Naive thymus-derived CD8-positive, alpha-beta T cell (primary cell): ENCODE measurements at regions of chr11 and their contacts with region 1.

Region 1: DNA sequence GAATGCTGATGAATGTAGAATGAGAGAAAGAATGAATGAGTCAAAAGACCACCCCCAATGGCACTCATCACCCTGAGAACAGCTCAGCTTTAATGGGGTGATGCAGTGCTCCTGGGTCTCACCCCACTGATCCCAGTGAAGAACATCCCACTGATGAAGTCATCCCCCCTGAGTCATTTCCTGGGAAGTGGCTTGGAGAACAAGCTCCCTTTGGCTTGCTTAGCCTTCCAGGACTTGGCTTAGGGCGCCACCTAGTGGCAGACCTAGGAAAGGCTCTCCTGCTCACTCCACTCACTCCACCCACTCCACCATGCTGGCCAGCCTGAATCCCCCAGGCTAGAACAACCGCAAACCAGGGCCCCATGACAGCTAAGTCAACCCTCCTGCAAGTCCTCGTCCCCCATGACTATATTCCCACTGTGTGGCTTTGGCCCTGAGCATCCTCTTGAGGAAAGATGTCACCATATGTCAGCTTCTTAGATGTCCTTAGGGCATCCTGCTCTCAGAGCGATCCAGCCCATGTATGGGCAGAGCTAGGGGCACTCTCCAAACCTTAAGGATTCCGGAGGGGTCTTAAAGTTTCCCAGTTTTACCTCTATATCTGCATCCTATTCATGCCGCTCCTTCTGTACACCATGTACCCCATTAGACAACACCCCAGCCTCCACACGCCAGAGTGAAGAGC is 17.8 kb upstream of the TMPRSS13 start:
- DNase-seq: peak; percentile 60 to 87 (median 78)
- ATAC-seq: no peak
- H3K4me3 Mint-ChIP-seq: peak overlapping the region in 9 of 10 donors; percentile 26 to 82 (median 44)
- H3K27ac Mint-ChIP-seq: peak overlapping the region; percentile 9 to 89 (median 69)
- H3K4me1 Mint-ChIP-seq: peaks cover 34 to 74% (median 67%) of the 10 kb centered on the region in 4 donors
- H3K27me3 Mint-ChIP-seq: peaks cover 0 to 2% (median 0%) of the 10 kb centered on the region in 5 donors

Region 2: GRCh38 chr11:117817368-117818040 is 129.5 kb before region 1 on chr11:
- POLR2A ChIA-PET with region 1: interaction called, 54 read pairs
- DNase-seq: peak; percentile 66 to 88 (median 79)
- ATAC-seq: peak in 1 of 2 donors; percentile 16
- H3K4me3 Mint-ChIP-seq: peak overlapping the region in 9 of 10 donors; percentile 48 to 79 (median 64)
- H3K27ac Mint-ChIP-seq: peak overlapping the region; percentile 71 to 94 (median 86)
- H3K4me1 Mint-ChIP-seq: peaks cover 28 to 62% (median 52%) of the 10 kb centered on the region in 4 donors
- H3K27me3 Mint-ChIP-seq: no peaks in the 10 kb centered on the region

Region 3: GRCh38 chr11:117959438-117960149 is 12.6 kb after region 1 on chr11:
- POLR2A ChIA-PET with region 1: interaction called, 17 read pairs
- DNase-seq: no peak
- ATAC-seq: no peak
- H3K4me3 Mint-ChIP-seq: peak overlapping the region in 2 of 10 donors; percentile 28 to 31
- H3K27ac Mint-ChIP-seq: peak overlapping the region in 5 of 10 donors; percentile 4 to 50 (median 27)
- H3K4me1 Mint-ChIP-seq: peaks cover 21 to 64% (median 55%) of the 10 kb centered on the region in 4 donors
- H3K27me3 Mint-ChIP-seq: no peaks in the 10 kb centered on the region

Region 4: GRCh38 chr11:117985953-117986887 is 39.2 kb after region 1 on chr11 and contains the start of gene IL10RA:
- POLR2A ChIA-PET with region 1: interaction called, 309 read pairs
- DNase-seq: peak; percentile 69 to 84 (median 80)
- ATAC-seq: peak; percentile 78 to 79
- H3K4me3 Mint-ChIP-seq: peak within 1 kb of the TSS; percentile 88 to 98 (median 93)
- H3K27ac Mint-ChIP-seq: peak within 1 kb of the TSS; percentile 89 to 99 (median 94)
- H3K4me1 Mint-ChIP-seq: peaks cover 41 to 86% (median 71%) of the 10 kb centered on the region in 4 donors
- H3K27me3 Mint-ChIP-seq: no peaks in the 10 kb centered on the region
- polyA plus RNA-seq, gene IL10RA: 99.2 to 185 (median 147) TPM

Region 5: GRCh38 chr11:118010738-118011461 is 63.9 kb after region 1 on chr11:
- POLR2A ChIA-PET with region 1: interaction called, 309 read pairs
- DNase-seq: peak in 1 of 10 donors; percentile 54
- ATAC-seq: peak; percentile 15 to 16
- H3K4me3 Mint-ChIP-seq: peak overlapping the region in 5 of 10 donors; percentile 28 to 66 (median 47)
- H3K27ac Mint-ChIP-seq: peak overlapping the region in 9 of 10 donors; percentile 60 to 100 (median 94)
- H3K4me1 Mint-ChIP-seq: peaks cover 68 to 100% (median 99%) of the 10 kb centered on the region in 4 donors
- H3K27me3 Mint-ChIP-seq: no peaks in the 10 kb centered on the region

Region 6: DNA sequence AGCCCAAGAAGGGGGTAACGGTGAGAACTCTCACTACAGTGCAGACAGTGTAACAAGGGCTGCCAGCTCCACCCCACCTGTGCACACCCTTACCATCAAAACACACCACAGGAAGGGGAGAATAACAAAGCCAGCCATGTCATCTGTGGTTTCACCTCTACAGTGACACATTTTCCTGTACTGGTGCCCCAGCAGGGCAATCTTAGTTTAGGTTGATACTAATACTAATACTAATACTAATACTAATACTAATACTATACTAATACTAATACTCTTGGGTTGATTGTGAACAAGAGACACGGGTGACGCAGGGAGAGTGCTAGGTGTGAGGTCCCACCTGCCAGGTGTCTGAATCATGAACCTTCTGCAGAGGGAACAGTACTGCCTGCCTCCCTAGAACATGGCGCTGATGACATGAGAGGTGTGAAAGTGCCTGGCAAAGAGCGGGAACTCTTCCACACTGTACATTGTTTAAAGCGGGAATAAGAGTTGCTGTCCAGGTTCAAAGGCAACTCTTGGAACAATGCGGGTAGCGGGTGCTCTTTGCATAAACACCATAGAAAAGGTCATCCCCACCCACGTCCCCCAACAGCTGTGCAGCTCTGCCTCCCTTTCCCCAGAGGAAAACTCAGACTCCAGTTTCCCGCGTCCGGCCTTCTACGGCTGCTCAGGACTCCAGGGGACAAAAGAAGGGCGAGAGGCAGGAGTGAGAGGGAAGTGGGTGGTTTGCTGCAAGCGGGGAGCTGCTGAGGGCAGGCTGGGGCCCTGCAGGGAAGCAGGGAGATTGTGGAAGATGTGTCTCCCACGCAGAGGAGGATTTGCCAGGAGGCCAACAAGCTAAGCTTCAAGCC is 104.9 kb after region 1 on chr11:
- POLR2A ChIA-PET with region 1: interaction called, 188 read pairs
- DNase-seq: peak; percentile 32 to 90 (median 79)
- ATAC-seq: peak; percentile 95 to 97
- H3K4me3 Mint-ChIP-seq: peak overlapping the region; percentile 54 to 94 (median 82)
- H3K27ac Mint-ChIP-seq: peak overlapping the region; percentile 90 to 100 (median 98)
- H3K4me1 Mint-ChIP-seq: peaks cover 37 to 62% (median 60%) of the 10 kb centered on the region in 4 donors
- H3K27me3 Mint-ChIP-seq: peaks cover 0 to 2% (median 0%) of the 10 kb centered on the region in 5 donors

Region 7: GRCh38 chr11:118064956-118065355 is 118.0 kb after region 1 on chr11:
- POLR2A ChIA-PET with region 1: no interaction called
- DNase-seq: no peak
- ATAC-seq: no peak
- H3K4me3 Mint-ChIP-seq: no peak overlapping the region
- H3K27ac Mint-ChIP-seq: no peak overlapping the region
- H3K4me1 Mint-ChIP-seq: peaks cover 0 to 2% (median 0%) of the 10 kb centered on the region in 4 donors
- H3K27me3 Mint-ChIP-seq: peaks cover 0 to 5% (median 0%) of the 10 kb centered on the region in 5 donors